PC-9 (cell line): ENCODE measurements at regions of chr11 and their contacts with region 1.

Region 1: DNA sequence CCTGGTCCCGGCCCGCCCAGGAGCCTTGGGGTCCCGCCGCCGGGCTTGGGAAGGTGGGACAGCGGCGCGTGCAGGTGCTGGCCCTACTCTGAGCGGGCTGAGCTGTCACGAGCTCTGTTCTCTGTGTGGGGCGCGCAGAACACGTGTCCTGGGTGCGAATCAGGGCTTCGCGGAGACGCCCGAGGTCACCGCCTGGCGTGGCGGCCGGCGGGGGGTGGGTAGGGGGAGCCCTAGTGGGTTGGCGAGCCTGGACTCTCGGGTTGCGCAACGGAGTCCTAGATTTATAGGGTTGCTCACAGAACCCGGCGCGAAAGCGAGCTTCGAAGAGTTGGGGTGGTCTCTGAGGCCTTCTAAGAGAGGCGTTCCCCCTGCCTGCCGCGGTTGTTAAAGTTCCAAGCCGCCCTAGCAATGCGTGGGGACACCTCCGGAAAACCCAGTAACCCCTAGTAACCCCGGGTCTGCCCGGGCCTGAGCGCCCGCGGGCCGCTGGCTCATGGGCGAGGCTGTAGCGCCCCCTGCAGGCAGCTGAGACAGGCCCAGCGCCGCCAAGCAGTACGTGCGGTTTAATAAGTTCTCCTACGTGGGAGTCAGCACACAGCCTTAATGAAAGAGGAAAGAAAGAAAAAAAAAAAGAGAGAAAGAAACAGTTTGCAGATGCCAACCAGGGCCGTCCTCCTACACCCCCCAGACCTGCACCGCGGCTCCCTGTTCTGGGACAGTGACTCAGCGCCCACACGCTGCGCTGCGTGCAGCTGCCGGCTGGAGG is 2.8 kb downstream of the ADM start:
- DNase-seq: peak; percentile 83 to 87
- H3K4me3 ChIP-seq: peak overlapping the region; percentile 87
- H3K27ac ChIP-seq: peak overlapping the region; percentile 98
- H3K4me1 ChIP-seq: peaks cover 25% of the 10 kb centered on the region
- H3K27me3 ChIP-seq: no peaks in the 10 kb centered on the region
- CTCF ChIP-seq: peak; percentile 95

Region 2: DNA sequence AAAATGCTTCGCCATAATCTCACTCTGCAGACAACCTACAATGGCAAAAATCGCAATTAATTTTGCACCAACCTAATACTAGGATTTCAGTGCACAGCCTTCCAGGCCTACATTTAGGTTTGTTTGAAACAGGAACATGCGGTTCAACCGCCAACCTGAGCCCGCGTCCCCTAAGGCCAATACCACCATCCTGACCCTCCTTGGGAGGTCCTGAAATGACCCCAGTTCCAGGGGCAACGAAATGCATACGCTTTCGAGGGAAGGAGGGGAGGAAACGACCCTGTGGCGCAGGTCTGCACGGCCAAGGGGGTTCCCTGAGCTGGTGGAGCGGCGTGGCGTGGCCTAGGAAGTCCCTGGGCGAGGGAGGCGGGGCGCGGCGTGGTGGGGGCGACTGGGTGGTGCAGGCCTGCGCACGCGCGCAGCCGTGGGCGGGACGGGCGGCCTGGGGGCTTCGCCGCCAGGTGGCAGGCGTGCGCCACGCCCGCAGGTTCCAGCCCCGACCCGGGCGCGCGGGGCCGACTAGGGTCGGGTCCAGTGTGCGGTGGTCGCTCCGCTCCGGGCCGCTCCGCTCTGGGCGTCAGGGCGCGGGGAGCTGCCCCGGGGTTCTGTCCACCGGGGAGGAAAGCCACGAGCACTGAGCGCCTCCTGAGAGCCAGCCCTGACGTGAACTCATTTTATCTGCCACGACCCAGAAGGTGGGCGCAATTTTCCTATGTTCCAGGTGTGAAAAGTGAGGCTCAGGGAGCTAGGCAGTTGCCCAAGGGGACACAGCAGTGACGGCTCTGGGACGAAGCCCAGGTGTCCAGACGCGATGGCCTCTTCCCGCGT is 549.6 kb before region 1 on chr11:
- CTCF ChIA-PET with region 1: interaction called, 4 read pairs
- POLR2A ChIA-PET with region 1: interaction called, 6 read pairs
- intact Hi-C with region 1: loop called (anchors 1 kb)
- DNase-seq: peak in 1 of 2 experiments; percentile 75
- H3K4me3 ChIP-seq: peak overlapping the region; percentile 81
- H3K27ac ChIP-seq: peak overlapping the region; percentile 76
- H3K4me1 ChIP-seq: peaks cover 29% of the 10 kb centered on the region
- H3K27me3 ChIP-seq: no peaks in the 10 kb centered on the region
- CTCF ChIP-seq: peak; percentile 42; the same call in 1 of the 2 replicates

Region 3: DNA sequence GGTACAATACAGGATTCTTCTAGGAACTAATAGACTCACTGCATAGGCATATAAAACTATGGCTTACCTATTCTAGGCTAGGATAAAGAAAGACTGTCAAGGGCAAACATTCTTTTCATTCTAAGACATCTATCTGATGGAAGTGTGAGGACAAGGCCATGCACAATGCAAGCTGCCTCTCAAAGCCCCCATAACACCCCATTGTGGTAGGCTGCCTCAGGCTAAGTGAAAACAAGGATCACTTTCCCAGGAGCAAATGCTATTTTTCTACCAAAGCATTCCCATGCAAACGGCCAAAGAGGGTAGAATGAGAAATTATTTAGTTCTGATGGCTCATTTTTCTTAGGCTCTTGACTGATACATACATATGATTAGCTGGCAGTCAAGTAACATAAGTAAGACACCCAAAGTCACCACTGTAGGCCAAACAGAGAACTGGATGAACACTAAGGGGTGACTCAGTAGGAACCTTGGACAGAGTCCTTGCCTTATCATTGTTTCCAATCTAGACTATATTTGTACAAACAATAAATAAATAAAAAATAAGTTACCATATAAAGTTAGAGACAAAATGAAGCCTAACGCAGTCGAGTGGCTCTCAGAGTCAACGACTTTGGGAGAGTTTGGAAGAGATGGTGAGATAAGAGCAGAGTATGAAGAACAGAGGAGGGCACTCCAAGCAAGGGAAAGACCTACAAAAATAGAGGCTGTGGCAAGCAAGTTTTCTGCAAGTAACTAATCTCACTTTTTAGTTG is 317.2 kb before region 1 on chr11:
- CTCF ChIA-PET with region 1: no interaction called
- POLR2A ChIA-PET with region 1: no interaction called
- intact Hi-C with region 1: loop called (anchors 10 kb)
- DNase-seq: no peak
- H3K4me3 ChIP-seq: no peak overlapping the region
- H3K27ac ChIP-seq: no peak overlapping the region
- H3K4me1 ChIP-seq: no peaks in the 10 kb centered on the region
- H3K27me3 ChIP-seq: no peaks in the 10 kb centered on the region
- CTCF ChIP-seq: no peak

Region 4: GRCh38 chr11:10208131-10208575 is 99.5 kb before region 1 on chr11:
- CTCF ChIA-PET with region 1: interaction called, 14 read pairs
- POLR2A ChIA-PET with region 1: no interaction called
- intact Hi-C with region 1: loop called (anchors 2 kb)
- DNase-seq: no peak
- H3K4me3 ChIP-seq: no peak overlapping the region
- H3K27ac ChIP-seq: no peak overlapping the region
- H3K4me1 ChIP-seq: 0 out of 2 replicates have a peak, but pooled peaks cover 3% of the 10 kb centered on the region
- H3K27me3 ChIP-seq: no peaks in the 10 kb centered on the region
- CTCF ChIP-seq: peak; percentile 75

Region 5: GRCh38 chr11:10366568-10367370 is 59.1 kb after region 1 on chr11:
- CTCF ChIA-PET with region 1: interaction called, 6 read pairs
- POLR2A ChIA-PET with region 1: no interaction called
- intact Hi-C with region 1: loop called (anchors 1 kb)
- DNase-seq: peak; percentile 67 to 73
- H3K4me3 ChIP-seq: no peak overlapping the region
- H3K27ac ChIP-seq: no peak overlapping the region
- H3K4me1 ChIP-seq: no peaks in the 10 kb centered on the region
- H3K27me3 ChIP-seq: no peaks in the 10 kb centered on the region
- CTCF ChIP-seq: peak; percentile 80

Region 6: DNA sequence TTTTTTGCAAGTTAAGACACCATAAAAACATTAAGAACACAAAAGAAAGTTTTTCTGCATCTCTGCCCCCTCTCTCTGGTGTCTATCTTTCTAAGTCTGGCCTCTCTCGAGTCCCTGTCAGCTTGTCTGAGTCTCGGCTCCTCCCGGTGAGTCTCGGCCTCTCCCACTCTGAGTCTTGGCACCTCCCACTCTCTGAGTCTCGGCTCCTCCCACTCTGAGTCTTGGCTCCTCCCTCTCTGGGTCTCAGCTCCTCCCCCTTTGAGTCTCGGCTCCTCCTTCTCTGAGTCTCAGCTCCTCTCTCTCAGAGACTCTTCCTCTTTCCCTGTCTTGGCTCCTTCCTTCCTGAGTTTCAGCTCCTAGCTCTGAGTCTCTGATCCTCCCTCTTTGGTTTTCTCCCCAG is 74.9 kb after region 1 on chr11:
- CTCF ChIA-PET with region 1: no interaction called
- POLR2A ChIA-PET with region 1: no interaction called
- intact Hi-C with region 1: no loop called
- DNase-seq: no peak
- H3K4me3 ChIP-seq: no peak overlapping the region
- H3K27ac ChIP-seq: no peak overlapping the region
- H3K4me1 ChIP-seq: peaks cover 1% of the 10 kb centered on the region
- H3K27me3 ChIP-seq: no peaks in the 10 kb centered on the region
- CTCF ChIP-seq: no peak

Region 7: DNA sequence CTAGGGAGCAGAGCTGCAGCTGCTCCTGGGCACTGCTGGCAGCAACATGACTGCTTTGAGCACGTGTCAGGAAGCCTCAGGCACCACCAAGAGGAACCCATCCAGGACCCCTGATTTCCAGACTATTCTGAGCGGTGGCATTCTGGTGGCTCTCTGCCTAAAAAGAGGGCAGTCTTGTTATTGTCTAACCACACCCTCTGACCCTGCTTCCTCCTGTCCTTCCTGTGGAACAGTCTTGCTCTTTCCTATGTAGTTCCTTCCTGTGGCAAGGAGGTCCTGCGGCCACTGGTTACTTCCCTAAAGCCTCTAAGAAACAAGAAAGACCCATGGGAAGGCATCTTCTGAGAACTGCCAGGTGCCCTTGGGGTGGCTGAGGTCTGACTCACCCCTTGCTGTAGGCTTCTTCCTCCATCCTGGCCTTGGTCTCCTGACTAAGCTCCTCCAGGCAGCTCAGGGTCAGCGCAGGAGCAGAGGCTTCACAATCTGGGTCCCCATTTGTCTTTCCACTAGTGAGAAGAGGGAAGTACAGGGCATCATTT is 273.9 kb after region 1 on chr11:
- CTCF ChIA-PET with region 1: interaction called, 11 read pairs
- POLR2A ChIA-PET with region 1: no interaction called
- intact Hi-C with region 1: no loop called
- DNase-seq: peak; percentile 41 to 85
- H3K4me3 ChIP-seq: no peak overlapping the region
- H3K27ac ChIP-seq: peak overlapping the region; percentile 55
- H3K4me1 ChIP-seq: peaks cover 8% of the 10 kb centered on the region
- H3K27me3 ChIP-seq: no peaks in the 10 kb centered on the region
- CTCF ChIP-seq: no peak

Region 8: GRCh38 chr11:10955616-10956015 is 648.0 kb after region 1 on chr11:
- CTCF ChIA-PET with region 1: no interaction called
- POLR2A ChIA-PET with region 1: no interaction called
- intact Hi-C with region 1: no loop called
- DNase-seq: no peak
- H3K4me3 ChIP-seq: no peak overlapping the region
- H3K27ac ChIP-seq: no peak overlapping the region
- H3K4me1 ChIP-seq: no peaks in the 10 kb centered on the region
- H3K27me3 ChIP-seq: no peaks in the 10 kb centered on the region
- CTCF ChIP-seq: no peak

Region 9: GRCh38 chr11:11998091-11998781 is 1690.6 kb after region 1 on chr11:
- CTCF ChIA-PET with region 1: no interaction called
- POLR2A ChIA-PET with region 1: interaction called, 16 read pairs
- intact Hi-C with region 1: no loop called
- DNase-seq: peak in 1 of 2 experiments; percentile 64
- H3K4me3 ChIP-seq: peak overlapping the region; percentile 56
- H3K27ac ChIP-seq: no peak overlapping the region
- H3K4me1 ChIP-seq: peaks cover 21% of the 10 kb centered on the region
- H3K27me3 ChIP-seq: no peaks in the 10 kb centered on the region
- CTCF ChIP-seq: no peak